GM12878 (cell line): ENCODE measurements at regions of chr1 and their contacts with region 1.

Region 1: GRCh38 chr1:111063595-111063994 is 76.3 kb downstream of the DRAM2 start:
- DNase-seq: no peak
- ATAC-seq: no peak
- H3K4me3 ChIP-seq: no peak overlapping the region
- H3K27ac ChIP-seq: no peak overlapping the region
- H3K4me1 ChIP-seq: peaks cover 6% of the 10 kb centered on the region; the same call in 1 of the 2 replicates
- H3K27me3 ChIP-seq: no peaks in the 10 kb centered on the region
- CTCF ChIP-seq: no peak
- EP300 ChIP-seq: no peak
- POLR2A ChIP-seq: no peak
- RAD21 ChIP-seq: no peak

Region 2: GRCh38 chr1:111082421-111083192 is 19.0 kb after region 1 on chr1:
- CTCF ChIA-PET with region 1: interaction called, 10 read pairs
- POLR2A ChIA-PET with region 1: no interaction called
- RAD21 ChIA-PET with region 1: no interaction called
- SMC1A ChIA-PET with region 1: interaction called, 3 read pairs
- in situ Hi-C with region 1: no loop called
- intact Hi-C with region 1: no loop called
- DNase-seq: peak; percentile 17
- ATAC-seq: peak; percentile 73
- H3K4me3 ChIP-seq: no peak overlapping the region
- H3K27ac ChIP-seq: no peak overlapping the region
- H3K4me1 ChIP-seq: no peaks in the 10 kb centered on the region
- H3K27me3 ChIP-seq: no peaks in the 10 kb centered on the region
- CTCF ChIP-seq: no peak
- EP300 ChIP-seq: peak; percentile 24 to 41; a peak in 2 of 4 replicates
- POLR2A ChIP-seq: no peak
- RAD21 ChIP-seq: no peak

Region 3: DNA sequence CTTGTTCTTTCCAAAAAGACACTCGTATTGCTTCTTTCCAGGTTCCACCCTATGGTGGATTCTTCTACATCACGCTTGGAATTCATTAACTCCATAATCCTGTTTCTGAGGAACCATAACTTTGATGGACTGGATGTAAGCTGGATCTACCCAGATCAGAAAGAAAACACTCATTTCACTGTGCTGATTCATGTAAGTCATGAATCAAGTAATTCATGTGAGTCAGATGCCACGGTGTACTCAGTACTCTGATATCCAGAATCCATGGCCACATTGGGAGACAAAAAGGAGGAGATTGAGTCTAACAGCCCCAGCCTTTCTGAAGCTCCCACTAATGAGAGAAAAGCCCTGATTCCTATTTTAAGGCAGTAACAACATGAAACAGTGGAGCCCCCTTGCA is 171.3 kb after region 1 on chr1:
- CTCF ChIA-PET with region 1: no interaction called
- POLR2A ChIA-PET with region 1: no interaction called
- RAD21 ChIA-PET with region 1: no interaction called
- SMC1A ChIA-PET with region 1: no interaction called
- in situ Hi-C with region 1: no loop called
- intact Hi-C with region 1: no loop called
- DNase-seq: no peak
- ATAC-seq: no peak
- H3K4me3 ChIP-seq: no peak overlapping the region
- H3K27ac ChIP-seq: no peak overlapping the region
- H3K4me1 ChIP-seq: no peaks in the 10 kb centered on the region
- H3K27me3 ChIP-seq: no peaks in the 10 kb centered on the region
- CTCF ChIP-seq: no peak
- EP300 ChIP-seq: no peak
- POLR2A ChIP-seq: no peak
- RAD21 ChIP-seq: no peak